Naive thymus-derived CD4-positive, alpha-beta T cell (primary cell): ENCODE measurements at regions of chr3 and their contacts with region 1.

Region 1: GRCh38 chr3:132722164-132723024 is at the start of gene NPHP3:
- DNase-seq: peak; percentile 75 to 95 (median 87)
- ATAC-seq: peak; percentile 87
- H3K4me3 ChIP-seq: peak within 1 kb of the TSS; percentile 88
- H3K4me3 Mint-ChIP-seq: peak within 1 kb of the TSS; percentile 86 to 95 (median 92)
- H3K27ac ChIP-seq: peak within 1 kb of the TSS; percentile 85
- H3K27ac Mint-ChIP-seq: peak within 1 kb of the TSS; percentile 84 to 95 (median 89)
- H3K4me1 ChIP-seq: peaks cover 16 to 26% of the 10 kb centered on the region in 2 donors
- H3K4me1 Mint-ChIP-seq: peaks cover 17 to 49% (median 43%) of the 10 kb centered on the region in 7 donors
- H3K27me3 ChIP-seq: no peaks in the 10 kb centered on the region
- H3K27me3 Mint-ChIP-seq: peaks cover 0 to 6% (median 0%) of the 10 kb centered on the region in 5 donors
- total RNA-seq, gene NPHP3: 21.8 to 78.9 (median 26.1) TPM

Region 2: GRCh38 chr3:131026321-131027178 is 1695.8 kb before region 1 on chr3 and contains the starts of genes ASTE1 and NEK11:
- CTCF ChIA-PET with region 1: no interaction called
- POLR2A ChIA-PET with region 1: no interaction called
- intact Hi-C with region 1: loop called (anchors 1 to 10 kb)
- DNase-seq: peak; percentile 87 to 95 (median 92)
- ATAC-seq: peak; percentile 99
- H3K4me3 ChIP-seq: peak within 1 kb of the TSS; percentile 97
- H3K4me3 Mint-ChIP-seq: peak within 1 kb of the TSS; percentile 85 to 96 (median 89)
- H3K27ac ChIP-seq: peak within 1 kb of the TSS; percentile 95
- H3K27ac Mint-ChIP-seq: peak within 1 kb of the TSS; percentile 96 to 99 (median 97)
- H3K4me1 ChIP-seq: peaks cover 34 to 40% of the 10 kb centered on the region in 2 donors
- H3K4me1 Mint-ChIP-seq: peaks cover 29 to 59% (median 52%) of the 10 kb centered on the region in 7 donors
- H3K27me3 ChIP-seq: no peaks in the 10 kb centered on the region
- H3K27me3 Mint-ChIP-seq: peaks cover 0 to 6% (median 0%) of the 10 kb centered on the region in 5 donors
- total RNA-seq, gene ASTE1: 18.7 to 38.5 (median 27.0) TPM
- total RNA-seq, gene NEK11: 1.7 to 9.0 (median 5.3) TPM

Region 3: DNA sequence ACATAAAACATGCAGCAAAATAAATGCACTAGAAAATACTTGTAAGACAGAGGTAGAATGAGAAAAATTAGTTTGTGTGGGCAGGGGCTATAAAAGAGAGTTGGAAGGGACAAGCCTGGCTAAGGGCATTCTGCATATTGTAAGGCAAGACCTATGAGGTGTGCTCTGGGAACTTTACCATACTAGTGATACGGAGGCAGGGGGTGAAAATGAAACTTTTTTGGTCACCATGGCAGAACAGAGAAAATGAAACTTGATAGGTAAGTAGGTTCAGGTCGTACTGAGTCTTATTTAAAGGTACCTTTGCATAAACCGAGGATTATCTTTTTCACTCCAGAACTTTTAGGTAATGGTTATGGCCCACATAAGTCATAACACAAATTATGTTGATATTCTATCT is 200.0 kb before region 1 on chr3:
- CTCF ChIA-PET with region 1: no interaction called
- POLR2A ChIA-PET with region 1: no interaction called
- intact Hi-C with region 1: no loop called
- DNase-seq: no peak
- ATAC-seq: no peak
- H3K4me3 ChIP-seq: no peak overlapping the region
- H3K4me3 Mint-ChIP-seq: peak overlapping the region in 1 of 10 donors; percentile 56
- H3K27ac ChIP-seq: no peak overlapping the region
- H3K27ac Mint-ChIP-seq: peak overlapping the region in 5 of 9 donors; percentile 10 to 35 (median 29)
- H3K4me1 ChIP-seq: no peaks in the 10 kb centered on the region
- H3K4me1 Mint-ChIP-seq: peaks cover 0 to 17% (median 0%) of the 10 kb centered on the region in 7 donors
- H3K27me3 ChIP-seq: no peaks in the 10 kb centered on the region
- H3K27me3 Mint-ChIP-seq: no peaks in the 10 kb centered on the region

Region 4: GRCh38 chr3:132659365-132660051 is 62.9 kb before region 1 on chr3 and contains the start of gene ACAD11:
- CTCF ChIA-PET with region 1: no interaction called
- POLR2A ChIA-PET with region 1: no interaction called
- intact Hi-C with region 1: loop called (anchors 1 kb)
- DNase-seq: peak in 7 of 9 donors; percentile 2 to 55 (median 18)
- ATAC-seq: peak; percentile 54
- H3K4me3 ChIP-seq: peak within 1 kb of the TSS; percentile 99
- H3K4me3 Mint-ChIP-seq: peak within 1 kb of the TSS; percentile 84 to 98 (median 97)
- H3K27ac ChIP-seq: peak within 1 kb of the TSS; percentile 92
- H3K27ac Mint-ChIP-seq: peak within 1 kb of the TSS; percentile 95 to 98 (median 96)
- H3K4me1 ChIP-seq: peaks cover 9 to 19% of the 10 kb centered on the region in 2 donors
- H3K4me1 Mint-ChIP-seq: peaks cover 42 to 78% (median 67%) of the 10 kb centered on the region in 7 donors
- H3K27me3 ChIP-seq: no peaks in the 10 kb centered on the region
- H3K27me3 Mint-ChIP-seq: no peaks in the 10 kb centered on the region
- total RNA-seq, gene ACAD11: 15.0 to 33.7 (median 27.5) TPM

Region 5: GRCh38 chr3:132670795-132671194 is 51.6 kb before region 1 on chr3:
- CTCF ChIA-PET with region 1: no interaction called
- POLR2A ChIA-PET with region 1: no interaction called
- intact Hi-C with region 1: no loop called
- DNase-seq: no peak
- ATAC-seq: no peak
- H3K4me3 ChIP-seq: no peak overlapping the region
- H3K4me3 Mint-ChIP-seq: no peak overlapping the region
- H3K27ac ChIP-seq: no peak overlapping the region
- H3K27ac Mint-ChIP-seq: no peak overlapping the region
- H3K4me1 ChIP-seq: no peaks in the 10 kb centered on the region
- H3K4me1 Mint-ChIP-seq: peaks cover 6 to 24% (median 13%) of the 10 kb centered on the region in 7 donors
- H3K27me3 ChIP-seq: no peaks in the 10 kb centered on the region
- H3K27me3 Mint-ChIP-seq: no peaks in the 10 kb centered on the region

Region 6: DNA sequence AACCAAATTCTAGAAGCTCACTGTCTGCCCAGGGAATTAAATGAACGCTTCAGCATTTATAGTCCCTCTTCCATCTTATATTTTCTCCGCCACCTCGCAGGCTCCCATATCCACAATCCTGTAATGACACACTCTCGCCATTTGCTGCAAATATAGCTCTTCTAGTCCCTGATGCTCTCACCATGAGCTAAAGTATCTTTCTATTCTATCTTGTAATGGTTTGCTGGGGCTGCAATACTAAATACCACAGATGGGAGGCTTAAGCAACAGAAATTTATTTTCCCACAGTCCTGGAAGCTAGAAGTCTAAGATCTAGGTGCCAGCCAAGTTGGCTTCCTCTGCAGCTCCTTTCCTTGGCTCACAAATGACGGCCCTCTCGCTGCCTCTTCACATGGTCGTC is 106.7 kb after region 1 on chr3:
- CTCF ChIA-PET with region 1: no interaction called
- POLR2A ChIA-PET with region 1: no interaction called
- intact Hi-C with region 1: no loop called
- DNase-seq: no peak
- ATAC-seq: no peak
- H3K4me3 ChIP-seq: no peak overlapping the region
- H3K4me3 Mint-ChIP-seq: no peak overlapping the region
- H3K27ac ChIP-seq: no peak overlapping the region
- H3K27ac Mint-ChIP-seq: no peak overlapping the region
- H3K4me1 ChIP-seq: no peaks in the 10 kb centered on the region
- H3K4me1 Mint-ChIP-seq: no peaks in the 10 kb centered on the region
- H3K27me3 ChIP-seq: no peaks in the 10 kb centered on the region
- H3K27me3 Mint-ChIP-seq: peaks cover 0 to 15% (median 6%) of the 10 kb centered on the region in 5 donors

Region 7: GRCh38 chr3:133448478-133449122 is 726.2 kb after region 1 on chr3:
- CTCF ChIA-PET with region 1: no interaction called
- POLR2A ChIA-PET with region 1: no interaction called
- intact Hi-C with region 1: loop called in 1 of 2 experiments (anchors 5 kb)
- DNase-seq: peak in 1 of 9 donors; percentile 41
- ATAC-seq: peak; percentile 76
- H3K4me3 ChIP-seq: no peak overlapping the region
- H3K4me3 Mint-ChIP-seq: peak overlapping the region in 3 of 10 donors; percentile 31 to 54 (median 36)
- H3K27ac ChIP-seq: no peak overlapping the region
- H3K27ac Mint-ChIP-seq: peak overlapping the region in 8 of 9 donors; percentile 14 to 87 (median 70)
- H3K4me1 ChIP-seq: peaks cover 5 to 14% of the 10 kb centered on the region in 2 donors
- H3K4me1 Mint-ChIP-seq: peaks cover 7 to 26% (median 15%) of the 10 kb centered on the region in 7 donors
- H3K27me3 ChIP-seq: no peaks in the 10 kb centered on the region
- H3K27me3 Mint-ChIP-seq: no peaks in the 10 kb centered on the region

Region 8: DNA sequence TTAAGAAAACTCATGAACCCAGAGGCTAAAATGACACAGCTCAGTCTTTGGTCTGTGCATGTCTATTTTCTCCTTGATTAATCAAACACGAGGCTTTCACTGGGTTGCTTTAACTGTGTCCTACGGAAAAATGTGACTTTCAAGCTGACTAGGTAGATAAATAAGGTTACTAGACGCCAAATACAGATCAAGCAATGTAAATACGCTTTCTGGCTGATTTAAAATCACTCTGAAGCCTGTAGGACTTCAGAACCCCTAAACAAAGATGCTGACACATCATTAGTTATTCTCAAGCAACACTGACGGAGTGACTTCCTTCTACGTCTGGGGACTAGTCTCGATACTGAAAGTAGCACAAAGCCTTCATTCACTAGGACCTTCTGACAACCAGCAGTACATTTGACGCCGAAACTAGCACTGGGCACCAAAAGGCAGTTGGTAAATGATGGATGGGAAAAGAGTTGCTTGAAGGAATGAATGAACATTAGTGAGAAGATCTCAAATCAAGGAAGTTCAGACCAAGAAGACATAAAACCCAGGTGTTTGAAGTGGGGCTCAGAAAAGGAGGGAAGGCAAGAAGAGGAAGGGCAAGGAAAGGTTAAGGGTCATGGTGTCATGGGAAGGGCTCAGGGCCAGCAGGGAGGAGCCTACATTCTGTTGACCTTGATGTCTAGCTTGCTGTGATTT is 784.0 kb after region 1 on chr3:
- CTCF ChIA-PET with region 1: no interaction called
- POLR2A ChIA-PET with region 1: no interaction called
- intact Hi-C with region 1: no loop called
- DNase-seq: peak in 7 of 9 donors; percentile 23 to 60 (median 50)
- ATAC-seq: peak; percentile 93
- H3K4me3 ChIP-seq: peak overlapping the region; percentile 1
- H3K4me3 Mint-ChIP-seq: peak overlapping the region; percentile 71 to 93 (median 82)
- H3K27ac ChIP-seq: peak overlapping the region; percentile 65
- H3K27ac Mint-ChIP-seq: peak overlapping the region; percentile 88 to 97 (median 94)
- H3K4me1 ChIP-seq: no peaks in the 10 kb centered on the region
- H3K4me1 Mint-ChIP-seq: peaks cover 10 to 19% (median 17%) of the 10 kb centered on the region in 7 donors
- H3K27me3 ChIP-seq: no peaks in the 10 kb centered on the region
- H3K27me3 Mint-ChIP-seq: no peaks in the 10 kb centered on the region

Region 9: DNA sequence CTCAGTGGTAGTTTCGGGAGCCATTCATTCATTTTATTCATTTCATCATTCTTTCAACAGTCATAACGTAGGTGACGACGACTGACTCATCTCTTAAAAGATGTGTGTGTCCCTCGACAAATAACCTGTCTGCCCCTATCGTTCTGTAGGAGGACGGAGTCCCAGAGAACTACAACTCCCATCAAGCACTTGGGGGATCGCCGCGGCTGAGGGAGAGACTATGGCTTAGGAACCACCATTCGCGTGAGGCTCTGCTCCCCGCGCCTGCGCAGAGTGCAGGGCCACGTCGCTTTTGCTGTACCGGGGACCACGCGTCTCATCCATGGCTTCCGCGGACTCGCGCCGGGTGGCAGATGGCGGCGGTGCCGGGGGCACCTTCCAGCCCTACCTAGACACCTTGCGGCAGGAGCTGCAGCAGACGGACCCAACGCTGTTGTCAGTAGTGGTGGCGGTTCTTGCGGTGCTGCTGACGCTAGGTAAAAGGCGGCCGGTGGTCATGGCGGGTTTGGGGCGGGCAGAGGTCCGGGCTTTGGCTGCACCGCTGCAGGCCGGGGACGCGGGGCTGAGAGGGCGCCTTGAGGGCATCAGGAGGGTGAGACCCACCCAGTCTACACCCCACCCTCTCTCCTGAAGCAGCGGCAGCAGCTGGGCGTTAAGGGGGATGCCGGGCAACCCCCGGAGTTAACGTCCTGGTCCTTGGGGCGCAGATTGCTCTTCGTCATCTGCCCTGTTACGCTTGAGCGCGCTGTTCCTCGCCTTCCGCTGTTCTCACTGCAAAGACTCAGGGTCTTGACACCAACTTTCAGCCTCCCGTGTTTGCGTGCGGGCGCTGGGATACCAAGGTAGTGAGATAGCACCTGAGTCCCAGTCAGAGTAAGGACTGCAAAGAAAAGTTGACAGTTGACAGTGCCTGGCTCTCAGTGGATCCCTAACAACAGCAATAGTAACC is 1083.4 kb after region 1 on chr3 and contains the start of gene SRPRB:
- CTCF ChIA-PET with region 1: no interaction called
- POLR2A ChIA-PET with region 1: no interaction called
- intact Hi-C with region 1: loop called (anchors 1 kb)
- DNase-seq: peak; percentile 91 to 96 (median 94)
- ATAC-seq: peak; percentile 98
- H3K4me3 ChIP-seq: peak within 1 kb of the TSS; percentile 76
- H3K4me3 Mint-ChIP-seq: peak within 1 kb of the TSS; percentile 90 to 99 (median 98)
- H3K27ac ChIP-seq: peak within 1 kb of the TSS; percentile 81
- H3K27ac Mint-ChIP-seq: peak within 1 kb of the TSS; percentile 70 to 98 (median 95)
- H3K4me1 ChIP-seq: peaks cover 7 to 8% of the 10 kb centered on the region in 2 donors
- H3K4me1 Mint-ChIP-seq: peaks cover 16 to 50% (median 34%) of the 10 kb centered on the region in 7 donors
- H3K27me3 ChIP-seq: no peaks in the 10 kb centered on the region
- H3K27me3 Mint-ChIP-seq: peaks cover 0 to 7% (median 5%) of the 10 kb centered on the region in 5 donors
- total RNA-seq, gene SRPRB: 27.4 to 63.3 (median 34.6) TPM

Region 10: GRCh38 chr3:134485718-134486576 is 1763.6 kb after region 1 on chr3 and contains the starts of genes ANAPC13 and CEP63:
- CTCF ChIA-PET with region 1: interaction called, 3 read pairs
- POLR2A ChIA-PET with region 1: no interaction called
- intact Hi-C with region 1: loop called in 1 of 2 experiments (anchors 1 kb)
- DNase-seq: peak; percentile 84 to 96 (median 96)
- ATAC-seq: peak; percentile 89
- H3K4me3 ChIP-seq: peak within 1 kb of the TSS; percentile 84
- H3K4me3 Mint-ChIP-seq: peak within 1 kb of the TSS; percentile 89 to 100 (median 99)
- H3K27ac ChIP-seq: peak within 1 kb of the TSS; percentile 87
- H3K27ac Mint-ChIP-seq: peak within 1 kb of the TSS; percentile 94 to 100 (median 99)
- H3K4me1 ChIP-seq: peaks cover 20 to 23% of the 10 kb centered on the region in 2 donors
- H3K4me1 Mint-ChIP-seq: peaks cover 41 to 80% (median 69%) of the 10 kb centered on the region in 7 donors
- H3K27me3 ChIP-seq: no peaks in the 10 kb centered on the region
- H3K27me3 Mint-ChIP-seq: no peaks in the 10 kb centered on the region
- total RNA-seq, gene ANAPC13: 21.2 to 36.7 (median 25.0) TPM
- total RNA-seq, gene CEP63: 21.1 to 42.3 (median 26.4) TPM